Gastrocnemius medialis (tissue), 4 donors: ENCODE measurements at regions of chrX and their contacts with region 1.

Region 1: DNA sequence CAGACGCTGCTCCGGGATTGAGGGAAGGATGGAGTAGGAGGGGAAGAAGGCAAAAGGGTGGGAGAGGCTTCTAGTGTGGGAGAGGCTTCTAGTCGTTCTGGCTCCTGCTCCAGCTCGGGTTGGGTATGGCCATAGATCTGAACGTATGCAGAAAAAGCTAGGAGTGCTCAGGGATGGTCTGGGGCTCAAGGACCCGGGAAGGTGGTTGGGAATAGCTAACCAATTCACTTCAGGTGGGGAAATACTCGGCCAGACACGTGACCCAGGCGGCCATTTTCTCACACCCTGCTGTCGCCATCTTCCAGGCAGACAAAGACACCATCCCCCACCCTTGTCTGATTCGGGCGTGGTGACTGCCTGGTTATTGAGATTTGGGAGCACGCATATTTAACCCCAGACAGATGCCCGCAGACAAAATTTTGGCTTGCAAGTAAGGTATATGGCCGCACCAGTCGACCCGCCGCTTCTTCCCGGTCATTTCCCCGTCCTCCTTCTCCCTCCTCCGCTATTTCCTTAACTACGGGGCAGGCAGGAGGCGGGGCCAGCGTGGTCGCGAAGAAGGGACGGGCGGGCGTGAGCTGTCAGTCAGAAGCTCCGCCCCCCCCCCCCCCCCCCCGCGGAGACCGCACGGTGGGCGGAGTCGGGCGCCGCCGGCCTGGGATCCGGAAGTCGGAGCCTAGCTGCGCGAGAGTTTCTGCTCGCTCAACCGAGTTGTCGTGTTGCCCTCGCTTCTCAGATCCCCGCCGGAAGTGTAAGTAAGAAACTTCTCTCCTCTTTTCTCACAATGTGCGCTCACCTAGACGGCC is at the start of gene GNL3L:
- DNase-seq: peak; percentile 78 to 87
- ATAC-seq: peak; percentile 91 to 92
- H3K4me3 ChIP-seq: peak within 1 kb of the TSS; percentile 64 to 84 (median 76)
- H3K27ac ChIP-seq: peak within 1 kb of the TSS; percentile 80 to 91 (median 84)
- H3K4me1 ChIP-seq: peaks cover 4 to 12% of the 10 kb centered on the region in 2 donors
- H3K27me3 ChIP-seq: no peaks in the 10 kb centered on the region
- CTCF ChIP-seq: no peak
- POLR2A ChIP-seq: peak; percentile 38 to 50
- total RNA-seq, gene GNL3L: 21.2 to 41.7 (median 34.9) TPM

Region 2: GRCh38 chrX:54439967-54440871 is 89.5 kb before region 1 on chrX and contains the start of gene TSR2:
- in situ Hi-C with region 1: loop called in 1 of 4 experiments (anchors 10 kb)
- intact Hi-C with region 1: loop called (anchors 2 kb)
- DNase-seq: peak; percentile 63 to 76
- ATAC-seq: peak; percentile 96 to 97
- H3K4me3 ChIP-seq: peak within 1 kb of the TSS; percentile 74 to 95 (median 90)
- H3K27ac ChIP-seq: peak within 1 kb of the TSS; percentile 61 to 77 (median 63)
- H3K4me1 ChIP-seq: peaks cover 6 to 14% of the 10 kb centered on the region in 2 donors
- H3K27me3 ChIP-seq: no peaks in the 10 kb centered on the region
- CTCF ChIP-seq: no peak
- POLR2A ChIP-seq: peak in 1 of 2 donors; percentile 49
- total RNA-seq, gene TSR2: 10.1 to 24.2 (median 18.0) TPM

Region 3: DNA sequence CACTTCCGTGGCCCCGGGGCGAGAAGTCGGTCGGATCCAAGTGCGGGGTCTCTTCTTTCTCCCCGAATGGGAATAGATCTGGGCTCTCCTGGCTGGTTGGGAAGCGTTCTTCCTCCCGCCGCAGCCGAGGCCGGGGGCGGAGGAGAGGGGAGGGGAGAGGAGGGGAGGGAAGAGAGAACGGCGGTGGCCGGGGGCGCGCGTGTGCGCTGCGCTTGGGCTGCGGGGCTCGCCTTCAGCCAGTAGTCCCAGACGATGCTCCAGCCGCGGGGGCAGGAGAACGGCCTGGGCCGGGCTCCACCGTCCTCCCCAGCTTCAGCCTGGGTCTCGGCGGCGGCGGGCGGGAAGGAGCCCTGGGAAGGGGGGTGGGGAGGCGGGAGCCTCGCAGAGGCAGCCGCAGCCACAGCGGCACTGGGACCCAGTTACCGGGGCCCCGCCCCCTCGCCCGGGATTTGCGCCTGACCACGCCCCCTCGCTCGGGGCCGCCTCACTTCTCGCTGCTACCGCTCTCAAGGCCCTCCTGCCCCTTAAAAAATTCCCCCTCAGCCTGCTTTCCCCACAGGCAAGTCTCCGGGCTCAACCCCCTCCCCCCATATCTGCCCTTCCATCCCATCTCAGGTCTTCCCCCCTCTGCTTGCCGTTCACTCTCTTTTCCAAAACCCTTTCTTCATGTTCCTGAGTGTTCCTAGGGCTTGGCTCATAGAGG is 33.8 kb before region 1 on chrX and contains the start of gene FGD1:
- in situ Hi-C with region 1: no loop called
- intact Hi-C with region 1: loop called (anchors 2 kb)
- DNase-seq: peak; percentile 17 to 26
- ATAC-seq: peak; percentile 46 to 58
- H3K4me3 ChIP-seq: peak within 1 kb of the TSS; percentile 54 to 71 (median 64)
- H3K27ac ChIP-seq: peak within 1 kb of the TSS; percentile 52 to 68 (median 62)
- H3K4me1 ChIP-seq: no peaks in the 10 kb centered on the region
- H3K27me3 ChIP-seq: peaks cover 0 to 4% (median 0%) of the 10 kb centered on the region in 3 donors
- CTCF ChIP-seq: no peak
- POLR2A ChIP-seq: no peak
- total RNA-seq, gene FGD1: 0.98 to 1.1 (median 1.0) TPM